ENCODE measurements at regions of chr9 and their contacts with region 1.

Region 1: GRCh38 chr9:38263532-38263931 is 129.0 kb upstream of the ALDH1B1 start:
- DNase-seq: peak; percentile 46
- H3K4me3 ChIP-seq: no peak overlapping the region
- H3K27ac ChIP-seq: no peak overlapping the region
- H3K4me1 ChIP-seq: no peaks in the 10 kb centered on the region
- H3K27me3 ChIP-seq: peaks cover 8% of the 10 kb centered on the region
- CTCF ChIP-seq: peak; percentile 53

Region 2: DNA sequence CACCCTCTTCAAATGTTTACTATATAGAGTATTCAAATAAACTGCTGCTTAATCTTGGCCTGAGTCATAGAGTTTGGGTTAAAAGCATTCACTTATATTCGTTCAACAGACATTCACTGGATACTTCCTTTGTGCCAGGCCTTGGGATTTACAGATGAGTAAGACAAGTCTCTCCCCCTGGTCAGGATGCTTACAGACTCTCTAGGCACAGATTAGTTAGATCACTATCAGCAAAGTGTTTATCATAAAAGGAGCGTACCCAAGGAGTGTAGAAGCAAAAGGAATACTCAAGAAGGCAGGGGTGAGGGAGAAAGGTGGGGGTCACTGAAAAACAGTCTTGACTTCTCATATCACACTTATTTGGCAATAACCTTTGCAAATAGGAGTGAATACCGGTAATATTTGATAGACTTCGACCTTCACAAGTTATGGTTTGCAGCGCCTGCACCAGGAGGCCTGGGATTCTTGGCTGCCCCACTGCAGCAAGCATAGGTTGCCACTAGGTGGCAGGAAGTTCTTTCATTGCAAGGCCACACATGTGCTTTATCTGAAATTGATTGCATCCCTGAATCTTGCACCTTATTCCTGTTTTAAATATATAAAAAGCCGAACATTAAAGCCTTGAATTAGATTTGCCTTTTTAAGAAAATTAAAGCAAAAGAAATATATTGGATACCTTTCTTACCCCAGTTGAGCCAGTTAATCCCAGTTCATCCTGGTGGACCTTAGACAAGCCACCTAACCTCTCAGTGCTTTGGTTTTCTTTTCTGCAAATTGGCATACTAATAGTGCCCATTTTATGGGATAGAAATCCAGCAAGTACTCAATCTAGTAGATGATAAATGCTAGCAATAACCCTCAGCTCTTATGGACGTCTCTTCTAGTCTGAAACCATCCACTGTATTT is 516.4 kb before region 1 on chr9:
- CTCF ChIA-PET with region 1: no interaction called
- POLR2A ChIA-PET with region 1: no interaction called
- intact Hi-C with region 1: loop called (anchors 5 kb)
- DNase-seq: peak; percentile 74
- H3K4me3 ChIP-seq: no peak overlapping the region
- H3K27ac ChIP-seq: no peak overlapping the region
- H3K4me1 ChIP-seq: no peaks in the 10 kb centered on the region
- H3K27me3 ChIP-seq: no peaks in the 10 kb centered on the region
- CTCF ChIP-seq: peak; percentile 94

Region 3: DNA sequence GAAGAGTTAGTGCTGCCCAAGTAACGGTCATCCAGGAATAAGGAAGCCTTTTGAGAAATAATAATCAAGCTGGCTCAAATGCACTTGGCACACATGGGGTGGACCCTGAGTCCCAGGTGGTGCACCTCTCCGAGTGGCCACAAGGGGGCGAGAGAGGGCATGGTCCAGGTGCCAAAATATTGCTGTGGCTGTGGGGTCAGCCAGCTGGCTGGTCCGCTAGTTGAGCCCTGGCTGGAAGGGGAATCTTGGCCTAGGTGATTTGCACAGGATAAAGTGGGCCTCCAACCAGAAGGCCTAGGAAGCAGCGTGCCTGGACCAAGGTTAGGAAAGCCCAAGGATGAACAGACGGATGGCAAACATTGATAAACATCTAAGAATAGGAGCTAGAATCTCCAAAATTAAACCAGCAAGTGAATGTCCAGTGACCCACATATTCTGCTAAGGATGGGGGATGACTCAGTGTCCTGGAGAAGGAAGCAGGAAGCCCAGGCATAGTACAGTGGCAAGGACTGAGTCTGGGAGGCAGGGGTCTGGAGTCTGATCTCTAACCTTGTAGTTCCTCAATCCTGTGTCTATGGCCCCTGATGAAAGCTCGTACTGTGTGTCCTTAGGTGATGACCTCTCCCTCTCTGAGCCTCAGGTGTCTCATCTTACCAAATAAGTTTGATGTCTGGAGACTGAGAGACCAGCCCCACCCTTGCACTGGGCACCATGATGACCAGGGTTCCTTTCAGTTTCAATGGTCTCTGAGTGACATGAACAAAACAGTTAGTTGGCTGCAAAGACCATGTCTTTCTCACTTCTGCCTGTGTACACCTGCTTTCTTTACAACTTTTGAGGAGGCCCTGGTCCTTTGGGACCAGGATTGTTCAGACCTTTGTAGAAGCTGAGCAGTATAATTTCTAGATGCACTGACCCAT is 175.3 kb before region 1 on chr9:
- CTCF ChIA-PET with region 1: no interaction called
- POLR2A ChIA-PET with region 1: no interaction called
- intact Hi-C with region 1: loop called (anchors 10 kb)
- DNase-seq: peak; percentile 50
- H3K4me3 ChIP-seq: no peak overlapping the region
- H3K27ac ChIP-seq: no peak overlapping the region
- H3K4me1 ChIP-seq: no peaks in the 10 kb centered on the region
- H3K27me3 ChIP-seq: no peaks in the 10 kb centered on the region
- CTCF ChIP-seq: peak; percentile 99

Region 4: DNA sequence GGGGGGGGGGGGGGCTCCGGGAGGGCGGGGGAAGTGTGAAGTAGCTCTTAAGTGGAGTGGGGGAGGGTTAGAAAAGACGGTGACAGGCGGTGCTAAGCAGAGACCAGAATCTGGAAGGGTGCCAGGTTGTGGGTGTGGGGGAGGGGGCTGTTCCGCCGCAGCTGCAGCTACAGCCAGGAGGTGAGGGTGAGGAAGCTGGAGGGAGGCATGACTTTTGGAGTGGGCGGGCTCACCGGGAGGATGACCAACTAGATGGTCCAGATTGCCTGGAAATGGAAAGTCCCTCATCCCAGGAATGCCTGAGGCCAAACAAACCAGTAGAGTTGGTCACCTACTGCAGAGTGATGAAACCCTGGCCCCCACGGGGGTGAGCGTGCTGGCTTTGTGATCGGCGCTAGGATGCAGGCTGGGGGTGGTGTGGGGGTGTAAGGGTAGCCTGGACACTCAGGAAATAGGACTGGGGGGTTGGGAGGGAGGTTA is 36.4 kb before region 1 on chr9:
- CTCF ChIA-PET with region 1: no interaction called
- POLR2A ChIA-PET with region 1: no interaction called
- intact Hi-C with region 1: no loop called
- DNase-seq: peak; percentile 51
- H3K4me3 ChIP-seq: no peak overlapping the region
- H3K27ac ChIP-seq: no peak overlapping the region
- H3K4me1 ChIP-seq: peaks cover 22% of the 10 kb centered on the region
- H3K27me3 ChIP-seq: peaks cover 7% of the 10 kb centered on the region
- CTCF ChIP-seq: no peak

Region 5: DNA sequence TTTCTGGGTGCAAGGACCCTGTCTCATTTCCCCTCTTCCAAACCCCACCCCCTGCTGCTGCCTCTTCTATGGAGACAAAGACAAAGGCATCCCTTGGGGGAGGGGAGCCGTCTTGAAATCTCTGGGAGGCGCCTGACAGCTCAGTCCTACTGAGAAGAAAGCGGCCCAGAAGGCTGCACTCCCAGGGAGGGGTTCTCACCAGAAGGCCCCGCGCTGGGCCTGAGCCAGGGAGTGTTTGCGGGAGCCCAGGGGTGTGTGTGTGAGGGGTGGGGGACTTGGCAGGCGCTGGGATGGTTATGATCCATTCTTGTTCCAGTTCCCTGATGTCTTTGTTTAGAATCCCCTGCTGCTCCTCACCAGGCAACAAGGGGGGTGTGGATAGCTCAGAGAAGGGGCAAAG is 83.3 kb after region 1 on chr9:
- CTCF ChIA-PET with region 1: no interaction called
- POLR2A ChIA-PET with region 1: no interaction called
- intact Hi-C with region 1: no loop called
- DNase-seq: peak; percentile 32
- H3K4me3 ChIP-seq: no peak overlapping the region
- H3K27ac ChIP-seq: no peak overlapping the region
- H3K4me1 ChIP-seq: peaks cover 4% of the 10 kb centered on the region
- H3K27me3 ChIP-seq: no peaks in the 10 kb centered on the region
- CTCF ChIP-seq: no peak

Region 6: GRCh38 chr9:38357350-38358114 is 94.0 kb after region 1 on chr9:
- CTCF ChIA-PET with region 1: no interaction called
- POLR2A ChIA-PET with region 1: no interaction called
- intact Hi-C with region 1: no loop called
- DNase-seq: no peak
- H3K4me3 ChIP-seq: no peak overlapping the region
- H3K27ac ChIP-seq: no peak overlapping the region
- H3K4me1 ChIP-seq: no peaks in the 10 kb centered on the region
- H3K27me3 ChIP-seq: no peaks in the 10 kb centered on the region
- CTCF ChIP-seq: no peak